A673 (cell line): ENCODE measurements at regions of chr1 and their contacts with region 1.

Region 1: GRCh38 chr1:35797380-35797779 is 10.4 kb upstream of the AGO4 start:
- DNase-seq: no peak
- H3K4me3 ChIP-seq: no peak overlapping the region
- H3K27ac ChIP-seq: no peak overlapping the region
- H3K4me1 ChIP-seq: no peaks in the 10 kb centered on the region
- H3K27me3 ChIP-seq: no peaks in the 10 kb centered on the region
- CTCF ChIP-seq: no peak

Region 2: GRCh38 chr1:34578306-34578705 is 1219.1 kb before region 1 on chr1:
- CTCF ChIA-PET with region 1: no interaction called
- POLR2A ChIA-PET with region 1: no interaction called
- intact Hi-C with region 1: no loop called
- DNase-seq: no peak
- H3K4me3 ChIP-seq: no peak overlapping the region
- H3K27ac ChIP-seq: no peak overlapping the region
- H3K4me1 ChIP-seq: no peaks in the 10 kb centered on the region
- H3K27me3 ChIP-seq: no peaks in the 10 kb centered on the region
- CTCF ChIP-seq: no peak

Region 3: DNA sequence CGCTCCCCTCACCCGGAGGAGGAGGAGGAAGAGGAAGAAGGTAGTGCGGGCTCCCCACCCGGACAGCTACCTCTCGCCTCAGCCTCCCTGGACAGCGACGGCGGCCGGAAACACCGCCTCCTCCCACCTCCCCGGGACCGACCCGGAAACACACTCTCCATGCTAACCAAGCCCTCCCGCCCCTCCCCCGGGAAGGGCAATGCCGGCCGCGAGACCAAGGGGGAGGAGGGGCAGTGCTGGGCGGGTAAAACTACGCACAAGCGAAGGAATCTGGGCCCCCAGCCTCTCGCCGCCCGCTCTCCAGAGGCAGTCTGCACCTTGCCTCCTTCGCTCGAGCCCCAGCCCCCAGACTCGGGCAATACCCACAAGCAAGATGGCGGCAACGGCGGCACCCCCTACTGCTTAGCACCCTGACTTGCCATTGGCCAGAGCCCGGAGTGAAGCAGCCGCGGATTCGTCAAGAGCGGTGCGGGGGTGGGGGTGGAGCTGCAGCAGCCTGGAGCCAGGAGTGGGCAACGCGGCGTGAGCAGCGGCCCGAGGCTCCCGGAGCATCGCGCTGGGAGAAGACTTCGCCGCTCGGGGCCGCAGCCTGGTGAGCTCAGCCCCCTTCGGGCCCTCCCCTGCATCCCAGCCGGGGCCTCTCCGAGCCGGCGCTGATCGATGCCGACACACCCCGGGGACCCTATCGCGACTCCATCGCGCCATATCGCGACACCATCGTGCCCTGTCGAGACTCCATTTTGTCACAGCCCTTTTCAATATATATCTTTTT is 239.9 kb before region 1 on chr1 and contains the starts of genes KIAA0319L and NCDN:
- CTCF ChIA-PET with region 1: no interaction called
- POLR2A ChIA-PET with region 1: no interaction called
- intact Hi-C with region 1: no loop called
- DNase-seq: peak; percentile 99
- H3K4me3 ChIP-seq: peak within 1 kb of the TSS; percentile 94
- H3K27ac ChIP-seq: peak within 1 kb of the TSS; percentile 92
- H3K4me1 ChIP-seq: peaks cover 14% of the 10 kb centered on the region
- H3K27me3 ChIP-seq: no peaks in the 10 kb centered on the region
- CTCF ChIP-seq: no peak
- total RNA-seq, gene KIAA0319L: 33.7 and 38.5 TPM in 2 replicates
- total RNA-seq, gene NCDN: 25.2 and 26.9 TPM in 2 replicates

Region 4: GRCh38 chr1:35864813-35865212 is 67.4 kb after region 1 on chr1:
- CTCF ChIA-PET with region 1: no interaction called
- POLR2A ChIA-PET with region 1: interaction called, 21 read pairs
- intact Hi-C with region 1: no loop called
- DNase-seq: no peak
- H3K4me3 ChIP-seq: no peak overlapping the region
- H3K27ac ChIP-seq: no peak overlapping the region
- H3K4me1 ChIP-seq: no peaks in the 10 kb centered on the region
- H3K27me3 ChIP-seq: no peaks in the 10 kb centered on the region
- CTCF ChIP-seq: no peak

Region 5: GRCh38 chr1:35876988-35877387 is 79.6 kb after region 1 on chr1:
- CTCF ChIA-PET with region 1: no interaction called
- POLR2A ChIA-PET with region 1: no interaction called
- intact Hi-C with region 1: no loop called
- DNase-seq: no peak
- H3K4me3 ChIP-seq: no peak overlapping the region
- H3K27ac ChIP-seq: no peak overlapping the region
- H3K4me1 ChIP-seq: no peaks in the 10 kb centered on the region
- H3K27me3 ChIP-seq: no peaks in the 10 kb centered on the region
- CTCF ChIP-seq: no peak